Activated CD4-positive, alpha-beta T cell treated with anti-CD3 and anti-CD28 coated beads for 36 hours (primary cell): ENCODE measurements at regions of chr6 and their contacts with region 1.

Region 1: GRCh38 chr6:44265007-44265721 is at the start of gene NFKBIE:
- DNase-seq: peak; percentile 97
- ATAC-seq: peak; percentile 52
- H3K4me3 Mint-ChIP-seq: peak within 1 kb of the TSS; percentile 88
- H3K27ac Mint-ChIP-seq: peak within 1 kb of the TSS; percentile 93
- H3K4me1 Mint-ChIP-seq: peaks cover 58% of the 10 kb centered on the region
- H3K27me3 Mint-ChIP-seq: peaks cover 14% of the 10 kb centered on the region
- total RNA-seq, gene NFKBIE: 17.2 to 19.9 TPM

Region 2: DNA sequence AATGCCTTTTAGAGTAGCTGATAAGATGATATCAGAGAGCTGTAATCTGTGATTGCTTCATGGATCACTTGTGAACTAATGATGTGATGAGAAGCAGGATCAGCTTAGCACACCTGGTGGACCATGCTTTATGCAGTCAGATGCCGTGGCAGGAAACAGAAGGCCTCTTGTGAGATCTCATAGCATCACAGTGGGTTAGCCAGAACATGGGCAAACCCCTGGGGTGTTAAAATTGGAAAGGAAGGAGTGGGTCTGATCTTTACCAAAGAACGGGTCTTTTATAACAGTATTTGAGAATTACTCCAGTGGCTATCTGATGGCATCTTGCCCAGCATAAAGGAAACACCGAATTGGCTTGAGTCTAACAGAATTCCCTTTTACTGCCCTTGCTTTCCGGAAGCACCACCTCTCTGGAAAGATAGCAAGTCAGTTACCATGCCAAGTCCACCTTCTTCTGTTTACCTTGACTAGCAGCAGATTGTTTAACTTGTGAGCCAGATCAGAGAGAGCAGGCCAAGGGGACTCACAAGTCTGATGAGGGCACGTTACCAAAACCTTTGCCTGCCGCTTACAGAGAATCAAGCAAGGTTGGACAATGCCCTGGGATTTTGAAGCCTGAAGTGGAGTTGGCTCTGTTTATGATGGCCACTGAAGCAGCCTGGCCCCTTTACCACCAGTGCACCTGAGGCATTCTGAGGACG is 1115.0 kb before region 1 on chr6:
- CTCF ChIA-PET with region 1: no interaction called
- POLR2A ChIA-PET with region 1: no interaction called
- intact Hi-C with region 1: no loop called
- DNase-seq: no peak
- ATAC-seq: no peak
- H3K4me3 Mint-ChIP-seq: no peak overlapping the region
- H3K27ac Mint-ChIP-seq: no peak overlapping the region
- H3K4me1 Mint-ChIP-seq: no peaks in the 10 kb centered on the region
- H3K27me3 Mint-ChIP-seq: no peaks in the 10 kb centered on the region

Region 3: GRCh38 chr6:44096612-44097011 is 168.6 kb before region 1 on chr6:
- CTCF ChIA-PET with region 1: interaction called, 7 read pairs
- POLR2A ChIA-PET with region 1: interaction called, 3 read pairs
- intact Hi-C with region 1: loop called in 1 of 2 experiments (anchors 2 kb)
- DNase-seq: peak; percentile 87
- ATAC-seq: peak; percentile 90
- H3K4me3 Mint-ChIP-seq: no peak overlapping the region
- H3K27ac Mint-ChIP-seq: no peak overlapping the region
- H3K4me1 Mint-ChIP-seq: no peaks in the 10 kb centered on the region
- H3K27me3 Mint-ChIP-seq: no peaks in the 10 kb centered on the region

Region 4: GRCh38 chr6:44221291-44221960 is 43.7 kb before region 1 on chr6:
- CTCF ChIA-PET with region 1: interaction called, 8 read pairs
- POLR2A ChIA-PET with region 1: interaction called, 3 read pairs
- intact Hi-C with region 1: loop called (anchors 1 to 2 kb)
- DNase-seq: peak; percentile 90
- ATAC-seq: peak; percentile 70
- H3K4me3 Mint-ChIP-seq: peak overlapping the region; percentile 10
- H3K27ac Mint-ChIP-seq: peak overlapping the region; percentile 69
- H3K4me1 Mint-ChIP-seq: peaks cover 48% of the 10 kb centered on the region
- H3K27me3 Mint-ChIP-seq: peaks cover 3% of the 10 kb centered on the region

Region 5: DNA sequence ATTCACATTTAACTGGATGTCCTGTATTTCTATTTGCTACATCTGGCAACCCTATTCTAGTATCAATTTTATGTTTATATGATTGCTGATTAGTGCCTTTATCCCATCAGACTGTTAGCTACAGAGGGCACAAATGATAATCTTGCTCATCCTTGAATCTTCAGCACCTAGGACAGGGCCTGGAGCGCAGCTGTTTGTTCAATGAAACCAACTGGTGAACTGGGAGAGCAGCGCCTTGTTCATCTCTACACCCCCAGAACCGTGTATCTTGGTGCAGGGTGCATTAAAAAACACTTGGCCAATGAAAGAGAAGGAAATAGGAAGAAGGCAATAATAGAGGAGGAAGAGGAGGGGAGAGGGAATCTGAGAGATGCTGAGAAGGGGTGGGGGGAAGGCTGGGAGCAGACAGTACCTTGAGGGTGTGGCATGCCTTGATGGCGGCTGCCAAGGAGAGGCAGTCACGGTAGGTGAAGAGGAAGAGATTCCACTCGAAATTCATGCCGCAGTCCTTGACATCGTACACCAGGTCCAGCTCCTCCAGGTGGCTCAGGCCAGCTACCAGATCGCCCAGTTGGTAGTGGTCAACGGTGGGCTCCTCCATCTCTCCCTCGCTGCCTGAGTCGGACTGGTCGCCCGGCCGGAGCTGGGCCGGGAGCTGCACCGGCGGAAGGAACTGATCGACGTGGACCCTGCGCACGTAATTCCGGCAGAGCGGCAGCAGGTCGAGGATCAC is 20.6 kb after region 1 on chr6:
- CTCF ChIA-PET with region 1: interaction called, 13 read pairs
- POLR2A ChIA-PET with region 1: no interaction called
- intact Hi-C with region 1: no loop called
- DNase-seq: no peak
- ATAC-seq: no peak
- H3K4me3 Mint-ChIP-seq: no peak overlapping the region
- H3K27ac Mint-ChIP-seq: no peak overlapping the region
- H3K4me1 Mint-ChIP-seq: no peaks in the 10 kb centered on the region
- H3K27me3 Mint-ChIP-seq: peaks cover 40% of the 10 kb centered on the region

Region 6: DNA sequence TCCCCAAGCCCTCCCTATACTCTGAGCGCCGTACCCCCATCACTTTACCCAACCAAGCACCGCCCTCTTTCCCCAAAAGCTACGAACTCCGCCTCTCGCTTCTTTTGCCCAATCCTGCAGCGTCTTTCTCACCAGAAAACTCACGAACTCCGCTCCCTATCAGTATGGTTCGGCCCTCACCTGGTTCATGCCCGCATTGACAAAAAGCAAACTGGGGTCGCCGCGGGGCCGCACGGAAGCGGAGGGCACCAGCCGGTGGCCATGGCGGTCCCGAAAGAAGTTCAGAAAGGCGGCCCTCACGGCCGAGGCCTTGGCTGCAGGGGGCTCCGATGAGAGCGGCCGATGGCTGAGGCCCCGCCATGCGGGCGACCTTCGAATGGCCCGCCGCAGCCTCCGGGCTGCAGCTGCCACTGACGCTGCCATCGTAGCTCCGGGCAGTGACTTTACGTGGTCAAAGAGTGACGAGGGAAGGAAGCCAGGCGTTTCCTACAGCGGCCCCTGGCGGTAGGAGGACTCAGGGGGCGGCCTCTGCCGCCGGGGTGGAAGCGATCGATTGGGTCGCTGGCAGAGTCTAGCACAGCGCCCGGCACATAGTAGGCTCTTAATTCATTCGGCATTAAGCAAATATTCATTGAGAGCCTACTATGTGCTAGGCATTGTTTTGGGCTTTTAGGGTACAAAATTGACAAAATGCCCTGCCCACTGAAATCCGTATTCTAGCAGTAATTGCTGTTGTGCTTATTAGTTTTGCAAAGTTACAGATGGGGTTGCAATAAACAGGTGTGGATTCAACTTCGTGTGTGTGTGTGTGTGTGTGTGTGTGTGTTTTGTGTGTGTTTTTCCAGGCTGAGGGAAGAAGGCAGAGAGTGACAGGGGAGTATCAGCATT is 48.0 kb after region 1 on chr6 and contains the start of gene AARS2:
- CTCF ChIA-PET with region 1: interaction called, 38 read pairs
- POLR2A ChIA-PET with region 1: interaction called, 3 read pairs
- intact Hi-C with region 1: loop called (anchors 1 kb)
- DNase-seq: peak; percentile 96
- ATAC-seq: peak; percentile 96
- H3K4me3 Mint-ChIP-seq: peak within 1 kb of the TSS; percentile 98
- H3K27ac Mint-ChIP-seq: peak within 1 kb of the TSS; percentile 86
- H3K4me1 Mint-ChIP-seq: peaks cover 14% of the 10 kb centered on the region
- H3K27me3 Mint-ChIP-seq: peaks cover 1% of the 10 kb centered on the region
- total RNA-seq, gene AARS2: 15.2 to 17.5 TPM

Region 7: GRCh38 chr6:44387346-44388133 is 122.4 kb after region 1 on chr6 and contains the start of gene CDC5L:
- CTCF ChIA-PET with region 1: no interaction called
- POLR2A ChIA-PET with region 1: no interaction called
- intact Hi-C with region 1: loop called in 1 of 2 experiments (anchors 1 kb)
- DNase-seq: peak; percentile 95
- ATAC-seq: peak; percentile 95
- H3K4me3 Mint-ChIP-seq: peak within 1 kb of the TSS; percentile 97
- H3K27ac Mint-ChIP-seq: peak within 1 kb of the TSS; percentile 98
- H3K4me1 Mint-ChIP-seq: peaks cover 31% of the 10 kb centered on the region
- H3K27me3 Mint-ChIP-seq: no peaks in the 10 kb centered on the region
- total RNA-seq, gene CDC5L: 25.1 to 28.9 TPM

Region 8: DNA sequence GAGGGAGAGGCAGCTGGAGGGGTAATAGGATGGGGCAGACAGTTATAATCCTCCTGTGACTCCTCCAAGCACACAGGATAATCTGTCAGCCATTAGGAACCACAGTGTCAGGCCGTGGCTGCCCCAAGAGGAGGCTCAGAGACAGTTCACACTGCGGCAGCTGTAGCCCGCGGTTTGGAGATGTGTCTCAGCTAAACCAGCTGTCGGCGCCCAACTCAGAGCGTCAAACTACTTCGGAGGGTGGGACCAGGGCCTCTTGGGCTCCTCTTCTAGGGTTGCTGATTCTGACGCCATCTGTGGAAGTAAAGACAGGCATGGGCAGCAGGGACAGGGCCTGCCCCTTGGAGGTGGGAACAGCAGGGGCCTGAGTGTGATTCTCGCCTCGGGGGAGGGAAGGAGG is 432.2 kb after region 1 on chr6:
- CTCF ChIA-PET with region 1: no interaction called
- POLR2A ChIA-PET with region 1: no interaction called
- intact Hi-C with region 1: no loop called
- DNase-seq: no peak
- ATAC-seq: no peak
- H3K4me3 Mint-ChIP-seq: no peak overlapping the region
- H3K27ac Mint-ChIP-seq: no peak overlapping the region
- H3K4me1 Mint-ChIP-seq: peaks cover 8% of the 10 kb centered on the region
- H3K27me3 Mint-ChIP-seq: peaks cover 3% of the 10 kb centered on the region

Region 9: DNA sequence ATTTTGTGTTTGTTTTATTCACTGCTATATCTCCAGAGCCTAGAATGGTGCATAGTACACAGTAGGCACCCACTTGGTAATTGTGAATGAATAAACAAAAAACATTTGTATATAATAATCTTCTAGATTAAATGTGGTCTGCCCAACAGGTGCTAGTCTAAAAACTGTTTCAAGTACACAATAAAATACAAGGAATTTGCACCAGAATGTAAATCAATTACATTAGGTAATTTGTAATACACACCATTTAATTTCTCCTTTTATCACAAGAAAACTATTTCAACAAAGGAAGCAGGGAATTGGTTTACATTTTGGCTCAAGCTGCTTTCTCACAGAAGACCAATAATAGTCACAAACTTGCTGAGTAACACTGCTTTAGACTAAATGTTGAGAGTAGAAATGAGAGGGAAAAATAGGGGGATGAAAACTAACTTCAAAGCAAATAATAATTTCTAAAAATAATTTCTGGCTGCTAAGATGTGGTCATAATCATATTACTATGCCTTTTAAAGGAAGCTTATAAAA is 1085.1 kb after region 1 on chr6:
- CTCF ChIA-PET with region 1: no interaction called
- POLR2A ChIA-PET with region 1: no interaction called
- intact Hi-C with region 1: no loop called
- DNase-seq: no peak
- ATAC-seq: no peak
- H3K4me3 Mint-ChIP-seq: no peak overlapping the region
- H3K27ac Mint-ChIP-seq: no peak overlapping the region
- H3K4me1 Mint-ChIP-seq: peaks cover 11% of the 10 kb centered on the region
- H3K27me3 Mint-ChIP-seq: no peaks in the 10 kb centered on the region